Posterior vena cava (tissue), 2 donors: ENCODE measurements at regions of chr12 and their contacts with region 1.

Region 1: GRCh38 chr12:8709124-8709830 is 11.5 kb downstream of the RIMKLB start:
- DNase-seq: no peak

Region 2: DNA sequence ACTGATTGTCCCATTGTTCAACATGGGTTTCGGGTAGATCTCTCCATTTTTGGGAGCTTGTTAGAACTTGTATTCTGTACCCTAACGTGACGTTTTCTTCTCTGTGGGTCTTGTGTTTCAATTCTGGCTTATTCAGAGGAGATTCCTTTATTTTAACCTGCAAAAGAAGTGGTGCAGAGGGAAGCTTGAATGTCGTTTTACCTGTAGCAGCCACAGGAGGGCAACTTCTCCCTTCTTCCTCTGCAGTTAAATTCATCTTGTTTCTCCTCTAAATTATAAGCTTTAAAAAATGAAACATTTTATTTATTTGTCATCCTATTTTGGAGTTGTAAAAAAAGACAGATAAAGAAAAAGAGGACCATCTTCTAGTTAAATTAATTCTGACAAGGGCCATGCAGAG is 209.7 kb before region 1 on chr12:
- intact Hi-C with region 1: no loop called
- DNase-seq: no peak

Region 3: DNA sequence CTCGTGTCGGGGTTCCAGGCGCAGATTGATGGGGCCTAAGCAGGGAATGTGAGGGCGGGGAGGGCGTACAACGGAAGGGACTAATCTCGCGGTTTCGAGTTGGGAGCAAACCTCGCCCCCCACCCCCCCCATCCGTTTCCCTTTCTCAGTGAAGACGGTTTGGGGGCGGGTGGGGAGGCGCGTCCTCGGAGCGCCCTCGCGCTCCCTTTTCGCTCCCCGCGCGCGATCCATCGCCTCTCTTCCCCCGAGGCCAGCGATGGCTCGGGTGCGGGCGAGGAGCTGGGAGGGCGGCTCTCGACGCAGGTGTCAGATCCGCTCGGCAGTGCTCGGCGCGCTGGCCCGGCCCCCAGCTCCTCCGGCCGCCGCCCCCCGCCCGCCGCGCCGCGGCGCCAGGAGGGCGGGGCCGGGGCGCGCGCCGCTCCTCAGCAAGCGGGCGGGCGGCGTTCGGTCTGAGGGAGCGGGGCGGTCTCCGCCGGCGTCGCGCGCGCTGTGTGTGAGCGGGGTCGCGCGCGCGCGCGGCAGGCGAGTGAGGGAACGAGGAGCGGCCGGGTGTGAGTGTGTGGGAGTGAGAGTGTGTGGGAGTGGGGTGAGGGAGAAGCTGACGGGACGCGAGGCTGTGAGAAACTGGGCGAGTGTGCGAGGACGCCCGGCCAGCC is 11.7 kb before region 1 on chr12 and contains the start of gene RIMKLB:
- intact Hi-C with region 1: no loop called
- DNase-seq: peak; percentile 95
- total RNA-seq, gene RIMKLB: 51.1 to 56.3 TPM

Region 4: DNA sequence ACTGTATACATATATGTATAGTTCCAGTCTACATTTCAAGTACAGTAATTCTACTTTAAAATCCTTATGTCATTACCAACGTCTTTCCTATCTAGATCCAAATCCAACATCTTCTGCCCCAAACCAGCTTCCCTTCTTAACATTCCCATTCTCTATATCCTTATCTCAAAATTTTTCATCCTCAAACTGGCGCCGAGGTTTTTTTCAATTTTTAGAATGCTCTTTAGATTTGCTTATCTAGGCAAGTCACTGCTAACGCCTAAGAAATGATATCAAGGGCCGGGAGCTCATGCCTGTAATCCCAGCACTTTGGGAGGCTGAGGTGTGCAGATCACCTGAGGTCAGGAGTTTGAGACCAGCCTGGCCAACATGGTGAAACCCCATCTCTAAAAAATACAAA is 36.8 kb after region 1 on chr12:
- intact Hi-C with region 1: loop called in 1 of 2 experiments (anchors 10 kb)
- DNase-seq: no peak